ENCODE measurements at regions of chr17 and their contacts with region 1.

Region 1: GRCh38 chr17:58517734-58518609 is 3.5 kb upstream of the MTMR4 start:
- DNase-seq: peak; percentile 95
- ATAC-seq: peak; percentile 79
- H3K4me3 Mint-ChIP-seq: peak overlapping the region; percentile 96
- H3K27ac Mint-ChIP-seq: peak overlapping the region; percentile 97
- H3K4me1 Mint-ChIP-seq: peaks cover 46% of the 10 kb centered on the region
- H3K27me3 Mint-ChIP-seq: no peaks in the 10 kb centered on the region
- CTCF ChIP-seq: no peak

Region 2: GRCh38 chr17:58317421-58318064 is 200.4 kb before region 1 on chr17:
- CTCF ChIA-PET with region 1: interaction called, 9 read pairs
- POLR2A ChIA-PET with region 1: interaction called, 12 read pairs
- intact Hi-C with region 1: loop called (anchors 1 kb)
- DNase-seq: peak; percentile 55
- ATAC-seq: peak; percentile 97
- H3K4me3 Mint-ChIP-seq: no peak overlapping the region
- H3K27ac Mint-ChIP-seq: peak overlapping the region; percentile 79
- H3K4me1 Mint-ChIP-seq: peaks cover 15% of the 10 kb centered on the region
- H3K27me3 Mint-ChIP-seq: no peaks in the 10 kb centered on the region
- CTCF ChIP-seq: no peak

Region 3: GRCh38 chr17:58427807-58428206 is 90.2 kb before region 1 on chr17:
- CTCF ChIA-PET with region 1: no interaction called
- POLR2A ChIA-PET with region 1: no interaction called
- intact Hi-C with region 1: no loop called
- DNase-seq: no peak
- ATAC-seq: no peak
- H3K4me3 Mint-ChIP-seq: peak overlapping the region; percentile 69
- H3K27ac Mint-ChIP-seq: no peak overlapping the region
- H3K4me1 Mint-ChIP-seq: peaks cover 6% of the 10 kb centered on the region
- H3K27me3 Mint-ChIP-seq: no peaks in the 10 kb centered on the region
- CTCF ChIP-seq: no peak

Region 4: DNA sequence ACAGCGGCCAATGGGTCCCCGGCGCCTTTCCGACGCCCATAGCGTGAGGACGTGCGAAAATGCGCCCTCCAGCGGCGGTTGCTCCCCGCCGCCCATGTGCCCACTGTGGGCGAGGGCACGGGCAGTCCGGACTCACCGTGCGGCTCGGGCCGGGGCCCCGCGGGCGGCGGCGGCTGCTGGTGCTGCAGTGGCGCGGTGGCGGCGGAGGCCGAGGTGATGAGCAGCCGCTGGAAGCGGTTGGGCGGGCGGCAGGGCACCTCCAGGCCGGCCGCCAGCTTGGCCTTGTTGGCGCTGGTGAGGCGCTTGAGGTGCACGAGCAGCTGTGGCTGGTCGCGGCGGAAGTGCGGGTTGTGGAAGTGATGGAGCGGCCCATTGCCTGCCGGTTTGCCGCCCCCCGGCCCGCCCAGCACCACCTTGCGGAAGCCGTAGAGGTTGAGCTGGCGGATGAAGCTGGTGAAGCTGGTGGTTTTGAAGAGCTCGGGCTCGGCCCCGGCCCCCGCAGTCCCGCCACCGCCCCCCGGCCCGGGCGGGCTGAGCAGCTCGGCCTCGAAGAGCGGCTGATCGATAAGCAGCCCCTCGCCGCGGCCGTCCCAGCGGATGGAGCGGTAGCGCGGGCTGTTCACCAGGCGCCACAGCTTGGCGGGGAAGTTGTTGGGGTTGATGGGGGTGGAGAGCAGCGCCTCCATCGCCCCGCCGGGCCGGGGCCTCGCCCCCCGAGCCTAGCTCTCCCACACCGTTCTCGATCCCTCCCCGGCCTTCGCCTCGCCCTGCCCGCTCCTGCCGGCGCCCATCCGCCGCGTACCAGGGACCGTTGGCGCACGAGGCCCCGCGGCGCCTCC is 30.2 kb before region 1 on chr17 and contains the start of gene HSF5:
- CTCF ChIA-PET with region 1: interaction called, 6 read pairs
- POLR2A ChIA-PET with region 1: interaction called, 18 read pairs
- intact Hi-C with region 1: loop called (anchors 1 kb)
- DNase-seq: peak; percentile 79
- ATAC-seq: peak; percentile 96
- H3K4me3 Mint-ChIP-seq: peak within 1 kb of the TSS; percentile 69
- H3K27ac Mint-ChIP-seq: peak within 1 kb of the TSS; percentile 66
- H3K4me1 Mint-ChIP-seq: peaks cover 19% of the 10 kb centered on the region
- H3K27me3 Mint-ChIP-seq: no peaks in the 10 kb centered on the region
- CTCF ChIP-seq: no peak
- total RNA-seq, gene HSF5: 4.5 and 5.5 TPM in 2 replicates

Region 5: GRCh38 chr17:58658804-58659713 is 141.1 kb after region 1 on chr17:
- CTCF ChIA-PET with region 1: no interaction called
- POLR2A ChIA-PET with region 1: interaction called, 29 read pairs
- intact Hi-C with region 1: loop called (anchors 1 kb)
- DNase-seq: peak; percentile 57
- ATAC-seq: peak; percentile 79
- H3K4me3 Mint-ChIP-seq: peak overlapping the region; percentile 84
- H3K27ac Mint-ChIP-seq: peak overlapping the region; percentile 100
- H3K4me1 Mint-ChIP-seq: peaks cover 13% of the 10 kb centered on the region
- H3K27me3 Mint-ChIP-seq: no peaks in the 10 kb centered on the region
- CTCF ChIP-seq: no peak

Region 6: GRCh38 chr17:59106463-59107305 is 588.7 kb after region 1 on chr17 and contains the start of gene TRIM37:
- CTCF ChIA-PET with region 1: no interaction called
- POLR2A ChIA-PET with region 1: interaction called, 3 read pairs
- intact Hi-C with region 1: loop called (anchors 1 kb)
- DNase-seq: peak; percentile 98
- ATAC-seq: peak; percentile 96
- H3K4me3 Mint-ChIP-seq: peak within 1 kb of the TSS; percentile 94
- H3K27ac Mint-ChIP-seq: peak within 1 kb of the TSS; percentile 82
- H3K4me1 Mint-ChIP-seq: peaks cover 28% of the 10 kb centered on the region
- H3K27me3 Mint-ChIP-seq: no peaks in the 10 kb centered on the region
- CTCF ChIP-seq: no peak
- total RNA-seq, gene TRIM37: 16.4 and 17.3 TPM in 2 replicates

Region 7: DNA sequence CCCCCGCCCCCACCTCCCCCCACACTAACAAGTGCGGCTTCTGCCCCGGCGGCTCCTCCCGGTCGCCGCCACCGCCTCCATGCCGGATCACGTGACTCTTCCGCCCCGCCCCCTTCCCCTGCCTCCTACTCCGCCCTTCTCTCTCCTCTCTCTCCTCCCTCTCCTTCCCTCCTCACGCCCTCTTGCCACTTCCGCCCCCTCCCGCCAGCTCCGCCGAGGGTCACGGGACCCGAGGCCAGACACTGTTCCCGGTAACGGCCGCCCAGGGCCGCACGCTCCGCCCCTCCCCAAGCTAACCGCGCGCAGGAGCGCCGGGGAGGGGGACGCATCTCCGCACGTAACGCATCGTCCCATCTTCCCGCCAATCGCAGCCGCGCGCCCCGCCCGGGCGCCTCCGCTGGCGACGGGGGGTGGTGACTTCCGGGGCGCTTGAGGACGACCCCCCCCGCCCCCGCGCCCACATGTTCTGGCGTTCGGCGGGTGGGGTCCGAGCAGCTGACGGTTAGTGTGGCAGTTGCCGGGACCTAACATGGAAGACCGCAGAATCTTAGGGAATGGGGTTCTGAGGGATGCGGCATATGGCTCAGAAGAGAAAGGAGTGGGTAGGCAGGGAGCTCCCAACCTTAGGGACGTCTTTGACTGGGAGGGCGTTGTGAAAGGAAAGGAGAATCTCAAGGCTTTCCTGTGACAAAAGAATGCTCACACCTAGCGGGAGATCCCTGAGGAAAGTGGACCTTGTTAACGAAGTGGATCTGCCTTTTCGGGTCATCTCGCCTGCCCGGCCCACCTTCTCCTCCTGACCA is 1874.3 kb after region 1 on chr17 and contains the start of gene USP32:
- CTCF ChIA-PET with region 1: no interaction called
- POLR2A ChIA-PET with region 1: no interaction called
- intact Hi-C with region 1: loop called (anchors 5 kb)
- DNase-seq: peak; percentile 94
- ATAC-seq: peak; percentile 88
- H3K4me3 Mint-ChIP-seq: peak within 1 kb of the TSS; percentile 97
- H3K27ac Mint-ChIP-seq: peak within 1 kb of the TSS; percentile 96
- H3K4me1 Mint-ChIP-seq: peaks cover 66% of the 10 kb centered on the region
- H3K27me3 Mint-ChIP-seq: no peaks in the 10 kb centered on the region
- CTCF ChIP-seq: no peak
- total RNA-seq, gene USP32: 48.9 and 59.2 TPM in 2 replicates

Measured in activated B cell treated with CpG ODN at 0.5 μM for 24 hours (primary cell).